ENCODE measurements at regions of chr20 and their contacts with region 1.

Region 1: GRCh38 chr20:62382306-62383198 is 4.4 kb upstream of the RPS21 start:
- DNase-seq: peak; percentile 62 to 78 (median 66)
- H3K4me3 ChIP-seq: no peak overlapping the region
- H3K4me3 Mint-ChIP-seq: peak overlapping the region in 2 of 7 donors; percentile 55 to 79
- H3K27ac ChIP-seq: no peak overlapping the region
- H3K27ac Mint-ChIP-seq: peak overlapping the region; percentile 54 to 90 (median 76)
- H3K4me1 ChIP-seq: peaks cover 19% of the 10 kb centered on the region
- H3K4me1 Mint-ChIP-seq: peaks cover 33 to 38% (median 34%) of the 10 kb centered on the region in 3 donors
- H3K27me3 ChIP-seq: no peaks in the 10 kb centered on the region
- H3K27me3 Mint-ChIP-seq: no peaks in the 10 kb centered on the region

Region 2: GRCh38 chr20:62301111-62301661 is 81.4 kb before region 1 on chr20:
- CTCF ChIA-PET with region 1: interaction called, 14 read pairs
- POLR2A ChIA-PET with region 1: no interaction called
- DNase-seq: no peak
- H3K4me3 ChIP-seq: no peak overlapping the region
- H3K4me3 Mint-ChIP-seq: peak overlapping the region in 4 of 7 donors; percentile 45 to 71 (median 66)
- H3K27ac ChIP-seq: no peak overlapping the region
- H3K27ac Mint-ChIP-seq: peak overlapping the region in 2 of 8 donors; percentile 72 to 87
- H3K4me1 ChIP-seq: peaks cover 26% of the 10 kb centered on the region
- H3K4me1 Mint-ChIP-seq: peaks cover 27 to 31% (median 31%) of the 10 kb centered on the region in 3 donors
- H3K27me3 ChIP-seq: no peaks in the 10 kb centered on the region
- H3K27me3 Mint-ChIP-seq: no peaks in the 10 kb centered on the region